B cell (primary cell): ENCODE measurements at regions of chr9 and their contacts with region 1.

Region 1: DNA sequence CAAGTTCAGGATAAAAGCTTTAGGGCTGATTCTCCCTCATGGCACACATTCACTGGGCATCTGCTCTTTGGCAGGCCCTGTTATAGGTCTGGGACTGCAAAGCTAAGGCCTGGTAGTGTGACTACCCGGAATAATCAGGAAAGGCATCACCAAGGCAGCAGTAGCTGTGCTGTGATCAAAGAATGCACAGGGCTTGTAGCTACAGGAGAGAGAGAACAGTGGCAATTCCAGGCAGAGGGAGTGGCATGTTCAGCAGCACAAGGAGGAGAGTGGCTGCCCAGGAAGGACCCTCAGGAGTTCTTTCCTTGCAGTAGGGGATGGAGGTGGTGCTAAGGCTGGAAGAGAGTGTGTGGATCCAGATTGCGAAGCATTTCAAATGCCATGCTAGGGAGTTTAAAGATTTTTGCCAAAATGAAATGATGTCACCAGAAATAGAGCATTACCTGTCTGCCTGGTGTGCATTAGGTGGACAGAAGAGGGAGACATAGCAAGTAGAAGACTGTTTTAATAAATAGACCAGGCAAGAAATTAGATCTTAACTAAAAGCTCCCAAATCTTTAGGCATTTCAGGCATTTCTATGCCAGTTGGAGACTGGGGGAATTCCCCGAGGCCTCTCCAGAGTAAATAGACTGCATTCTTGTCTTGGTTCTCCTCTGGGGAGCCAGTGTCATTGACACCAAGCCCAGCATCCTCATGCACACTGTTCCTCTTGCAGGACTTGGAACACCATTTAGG is 69.1 kb downstream of the GPR21 start:
- DNase-seq: no peak
- ATAC-seq: no peak
- H3K4me3 ChIP-seq: no peak overlapping the region
- H3K4me3 Mint-ChIP-seq: no peak overlapping the region
- H3K27ac ChIP-seq: peak overlapping the region in 1 of 2 donors; percentile 54
- H3K27ac Mint-ChIP-seq: peak overlapping the region; percentile 66
- H3K4me1 ChIP-seq: no peaks in the 10 kb centered on the region
- H3K4me1 Mint-ChIP-seq: peaks cover 2% of the 10 kb centered on the region
- H3K27me3 ChIP-seq: no peaks in the 10 kb centered on the region
- H3K27me3 Mint-ChIP-seq: no peaks in the 10 kb centered on the region
- CTCF ChIP-seq: peak; percentile 36

Region 2: DNA sequence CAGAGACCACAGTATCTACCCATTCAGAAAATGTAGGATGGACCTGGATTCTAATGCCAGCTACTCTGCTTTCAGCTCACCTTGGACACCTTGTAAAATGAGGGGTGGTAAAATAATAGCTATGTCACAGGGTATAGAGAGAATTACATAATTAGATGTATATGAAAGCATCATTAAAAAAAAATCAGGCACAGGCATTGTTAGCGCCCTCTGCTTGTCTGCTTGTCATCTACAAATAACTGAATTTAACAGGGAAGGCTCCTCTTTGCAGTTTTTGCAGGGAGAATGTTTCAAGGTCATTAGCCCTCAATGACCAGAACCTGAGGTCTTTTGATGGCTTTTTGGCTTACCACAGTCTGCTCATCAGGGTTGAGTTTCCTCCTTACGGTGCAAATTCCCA is 11.1 kb before region 1 on chr9:
- CTCF ChIA-PET with region 1: interaction called, 37 read pairs
- POLR2A ChIA-PET with region 1: interaction called, 3 read pairs
- intact Hi-C with region 1: no loop called
- DNase-seq: no peak
- ATAC-seq: no peak
- H3K4me3 ChIP-seq: no peak overlapping the region
- H3K4me3 Mint-ChIP-seq: no peak overlapping the region
- H3K27ac ChIP-seq: no peak overlapping the region
- H3K27ac Mint-ChIP-seq: peak overlapping the region; percentile 44
- H3K4me1 ChIP-seq: peaks cover 46 to 52% of the 10 kb centered on the region in 2 donors
- H3K4me1 Mint-ChIP-seq: peaks cover 76% of the 10 kb centered on the region
- H3K27me3 ChIP-seq: no peaks in the 10 kb centered on the region
- H3K27me3 Mint-ChIP-seq: no peaks in the 10 kb centered on the region
- CTCF ChIP-seq: no peak